ENCODE measurements at regions of chr18 and their contacts with region 1.

Region 1: GRCh38 chr18:57561728-57562423 is 24.6 kb downstream of the FECH start:
- DNase-seq: peak in 1 of 2 experiments; percentile 3
- H3K4me3 ChIP-seq: no peak overlapping the region
- H3K27ac ChIP-seq: no peak overlapping the region
- H3K4me1 ChIP-seq: no peaks in the 10 kb centered on the region
- H3K27me3 ChIP-seq: no peaks in the 10 kb centered on the region
- CTCF ChIP-seq: peak; percentile 97

Region 2: GRCh38 chr18:56748698-56749268 is 813.1 kb before region 1 on chr18:
- CTCF ChIA-PET with region 1: no interaction called
- POLR2A ChIA-PET with region 1: no interaction called
- intact Hi-C with region 1: loop called (anchors 2 kb)
- DNase-seq: no peak
- H3K4me3 ChIP-seq: no peak overlapping the region
- H3K27ac ChIP-seq: no peak overlapping the region
- H3K4me1 ChIP-seq: no peaks in the 10 kb centered on the region
- H3K27me3 ChIP-seq: no peaks in the 10 kb centered on the region
- CTCF ChIP-seq: peak; percentile 86

Region 3: DNA sequence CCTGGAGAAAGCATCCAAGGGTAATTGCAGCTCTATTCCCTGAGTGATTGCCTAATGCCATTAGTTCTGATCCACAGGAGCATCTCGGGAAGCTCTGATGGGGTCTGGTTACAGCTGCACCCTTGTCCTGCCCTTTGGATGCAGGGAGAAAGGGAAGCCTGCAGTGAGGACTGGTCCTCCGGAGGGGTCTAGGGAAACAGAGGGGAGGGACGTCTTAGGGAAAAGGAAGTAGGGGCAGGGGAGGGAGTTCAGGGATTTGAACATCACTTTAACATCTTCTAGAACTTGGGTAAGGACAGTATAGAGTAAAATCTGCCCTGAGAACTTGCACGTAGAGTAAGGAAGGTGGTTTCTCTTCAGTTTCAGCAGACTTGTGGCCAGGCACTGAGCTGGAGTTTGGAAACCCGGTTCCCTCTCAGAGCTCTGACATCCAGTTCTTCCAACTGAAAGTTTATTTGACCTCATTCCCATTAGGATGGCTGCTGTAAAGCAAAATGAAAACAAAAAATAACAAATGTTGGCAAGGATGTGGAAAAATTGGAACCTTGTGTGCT is 106.2 kb before region 1 on chr18:
- CTCF ChIA-PET with region 1: no interaction called
- POLR2A ChIA-PET with region 1: no interaction called
- intact Hi-C with region 1: no loop called
- DNase-seq: no peak
- H3K4me3 ChIP-seq: no peak overlapping the region
- H3K27ac ChIP-seq: no peak overlapping the region
- H3K4me1 ChIP-seq: no peaks in the 10 kb centered on the region
- H3K27me3 ChIP-seq: no peaks in the 10 kb centered on the region
- CTCF ChIP-seq: no peak

Region 4: DNA sequence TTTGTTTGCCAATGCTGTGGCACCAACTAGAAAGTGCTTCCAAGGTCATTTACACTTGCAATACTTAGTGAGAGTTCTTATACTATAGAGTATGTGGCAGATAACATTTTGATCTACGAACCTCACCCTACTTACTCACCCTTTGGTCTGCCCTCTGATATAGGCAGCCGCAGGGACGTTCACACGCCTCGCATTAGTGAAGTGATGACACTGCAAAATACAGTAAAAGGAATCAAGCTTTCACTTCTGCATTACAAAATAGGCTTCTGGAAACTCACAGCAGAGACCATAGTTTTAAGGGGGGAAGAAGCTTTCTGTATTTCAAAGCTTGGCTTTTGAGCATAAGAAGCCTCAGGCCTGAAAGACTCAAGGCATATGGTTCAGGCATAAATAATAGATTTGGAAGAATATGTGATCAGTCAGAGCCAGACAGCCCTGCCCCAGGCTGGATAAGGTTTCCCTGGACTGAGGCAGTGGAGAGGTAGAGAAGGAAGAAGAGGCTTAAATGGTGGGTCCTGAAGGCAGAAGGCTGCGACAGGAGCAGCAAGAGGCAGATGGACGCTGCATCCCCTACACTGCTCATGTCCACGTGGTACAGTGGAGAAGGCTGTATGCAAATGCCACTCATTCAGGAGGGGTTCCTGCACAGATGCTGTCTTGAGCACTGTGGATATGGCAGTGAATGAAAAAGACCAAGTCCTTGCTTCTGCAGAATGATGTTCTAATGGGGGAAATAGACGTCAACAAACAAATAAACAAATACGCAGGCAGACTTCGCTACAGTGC is 38.5 kb before region 1 on chr18:
- CTCF ChIA-PET with region 1: no interaction called
- POLR2A ChIA-PET with region 1: no interaction called
- intact Hi-C with region 1: no loop called
- DNase-seq: no peak
- H3K4me3 ChIP-seq: no peak overlapping the region
- H3K27ac ChIP-seq: no peak overlapping the region
- H3K4me1 ChIP-seq: 0 out of 2 replicates have a peak, but pooled peaks cover 4% of the 10 kb centered on the region
- H3K27me3 ChIP-seq: no peaks in the 10 kb centered on the region
- CTCF ChIP-seq: no peak

Measured in PC-9 (cell line).